Activated B cell treated with CpG ODN at 0.5 μM for 24 hours (primary cell): ENCODE measurements at regions of chr4 and their contacts with region 1.

Region 1: DNA sequence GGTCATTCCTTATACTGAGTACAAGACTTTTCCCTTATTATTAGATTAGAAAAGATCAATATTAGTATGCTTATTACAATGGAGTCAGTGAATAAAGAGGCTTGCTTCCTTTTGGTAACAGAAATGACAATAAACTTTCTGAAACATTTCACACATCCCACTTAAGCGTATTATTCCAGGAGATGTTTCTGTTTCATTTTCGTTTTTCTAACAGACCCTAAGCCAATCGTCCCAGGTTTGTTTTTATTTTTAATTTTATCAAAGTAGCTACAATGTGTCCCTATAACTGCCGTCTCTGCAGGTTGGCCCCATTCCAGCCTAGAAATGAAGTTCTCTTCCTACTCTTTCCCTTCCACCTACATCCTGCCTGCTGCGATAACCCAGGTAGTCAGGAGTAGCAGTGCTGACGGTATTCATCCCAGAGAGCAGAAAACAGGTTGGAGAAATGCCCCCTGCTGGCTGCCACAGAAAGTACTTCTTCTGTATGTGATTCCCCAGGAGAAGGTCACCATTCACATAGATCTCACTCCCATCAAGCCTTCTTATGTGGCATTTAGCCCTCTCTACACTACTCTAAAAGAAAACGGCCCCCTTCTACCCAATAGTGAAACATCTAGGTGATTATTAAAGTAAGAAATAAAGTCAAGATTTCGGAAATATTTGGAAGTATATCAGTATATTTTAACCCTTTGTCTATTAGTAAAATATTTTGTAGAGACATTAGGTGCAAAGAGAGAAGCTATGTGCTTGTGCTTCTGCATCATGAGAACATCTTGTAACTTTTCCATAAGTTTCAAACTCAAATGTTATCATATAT is 40.4 kb downstream of the ENPEP start:
- DNase-seq: peak; percentile 21
- ATAC-seq: peak; percentile 94
- H3K4me3 Mint-ChIP-seq: peak overlapping the region; percentile 94
- H3K27ac Mint-ChIP-seq: peak overlapping the region; percentile 47
- H3K4me1 Mint-ChIP-seq: peaks cover 13% of the 10 kb centered on the region
- H3K27me3 Mint-ChIP-seq: peaks cover under 1% of the 10 kb centered on the region
- CTCF ChIP-seq: peak; percentile 59

Region 2: DNA sequence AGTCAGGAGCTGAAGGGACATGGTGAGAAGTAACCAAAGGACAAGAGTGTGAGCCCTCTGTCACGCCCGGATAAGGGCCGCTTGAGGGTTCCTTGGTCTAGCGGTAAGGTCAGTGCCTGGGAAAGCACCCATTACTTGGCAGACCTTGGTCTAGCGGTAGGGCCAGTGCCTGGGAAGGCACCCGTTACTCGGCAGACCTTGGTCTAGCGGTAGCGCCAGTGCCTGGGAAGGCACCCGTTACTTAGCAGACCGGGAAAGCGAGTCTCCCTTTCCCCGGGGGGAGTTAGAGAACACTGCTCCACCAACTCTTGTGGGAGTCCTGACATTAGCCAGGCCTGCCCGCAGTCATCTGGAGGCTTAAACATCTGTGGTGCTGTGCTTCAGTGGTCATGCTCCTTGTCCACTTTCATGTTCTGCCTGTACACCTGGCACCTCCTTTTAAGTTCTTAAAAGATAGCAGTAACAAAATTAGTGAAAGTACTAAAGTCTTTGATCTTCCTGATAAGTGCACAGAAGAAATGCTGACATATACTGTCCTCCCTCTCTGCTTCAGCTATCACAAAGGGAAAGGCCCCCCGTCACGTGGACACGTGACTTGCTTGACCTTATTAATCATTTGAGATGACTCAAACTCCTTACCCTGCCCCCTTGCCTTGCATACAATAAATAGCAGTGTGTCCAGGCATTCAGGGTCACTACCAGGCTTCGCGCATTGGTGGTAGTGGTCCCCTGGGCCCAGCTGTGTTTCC is 1092.0 kb before region 1 on chr4:
- CTCF ChIA-PET with region 1: no interaction called
- POLR2A ChIA-PET with region 1: no interaction called
- intact Hi-C with region 1: loop called (anchors 1 kb)
- DNase-seq: no peak
- ATAC-seq: no peak
- H3K4me3 Mint-ChIP-seq: no peak overlapping the region
- H3K27ac Mint-ChIP-seq: no peak overlapping the region
- H3K4me1 Mint-ChIP-seq: no peaks in the 10 kb centered on the region
- H3K27me3 Mint-ChIP-seq: no peaks in the 10 kb centered on the region
- CTCF ChIP-seq: no peak

Region 3: DNA sequence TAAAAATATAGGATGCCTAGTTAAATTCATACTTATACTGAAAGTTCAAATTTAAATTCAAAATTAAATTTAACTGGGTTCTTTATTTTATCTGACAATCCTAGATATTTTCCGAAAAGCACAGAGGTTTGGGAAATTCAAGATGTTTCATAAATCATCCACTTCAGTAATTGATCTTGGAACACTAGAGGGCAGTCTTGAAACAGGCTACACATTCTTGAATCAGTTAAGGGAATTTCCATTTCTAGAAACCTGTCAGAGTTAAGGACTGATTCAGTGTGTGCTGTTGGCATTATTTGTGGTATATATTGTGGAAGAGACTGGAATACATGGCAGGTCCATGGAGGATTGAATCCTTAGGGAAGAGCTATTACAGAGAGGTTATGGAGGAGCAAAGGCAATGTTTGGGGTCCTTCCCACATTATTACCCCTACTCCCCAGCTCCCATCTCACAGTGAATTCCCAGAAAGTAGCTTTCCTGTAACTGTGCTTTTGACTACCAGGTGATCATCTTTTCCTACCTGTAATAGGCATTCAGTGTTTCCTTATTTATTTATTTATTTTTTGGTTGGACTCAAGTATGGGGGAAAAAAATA is 510.8 kb before region 1 on chr4:
- CTCF ChIA-PET with region 1: interaction called, 232 read pairs
- POLR2A ChIA-PET with region 1: no interaction called
- intact Hi-C with region 1: loop called (anchors 1 kb)
- DNase-seq: no peak
- ATAC-seq: peak; percentile 60
- H3K4me3 Mint-ChIP-seq: no peak overlapping the region
- H3K27ac Mint-ChIP-seq: no peak overlapping the region
- H3K4me1 Mint-ChIP-seq: no peaks in the 10 kb centered on the region
- H3K27me3 Mint-ChIP-seq: peaks cover 6% of the 10 kb centered on the region
- CTCF ChIP-seq: peak; percentile 83

Region 4: DNA sequence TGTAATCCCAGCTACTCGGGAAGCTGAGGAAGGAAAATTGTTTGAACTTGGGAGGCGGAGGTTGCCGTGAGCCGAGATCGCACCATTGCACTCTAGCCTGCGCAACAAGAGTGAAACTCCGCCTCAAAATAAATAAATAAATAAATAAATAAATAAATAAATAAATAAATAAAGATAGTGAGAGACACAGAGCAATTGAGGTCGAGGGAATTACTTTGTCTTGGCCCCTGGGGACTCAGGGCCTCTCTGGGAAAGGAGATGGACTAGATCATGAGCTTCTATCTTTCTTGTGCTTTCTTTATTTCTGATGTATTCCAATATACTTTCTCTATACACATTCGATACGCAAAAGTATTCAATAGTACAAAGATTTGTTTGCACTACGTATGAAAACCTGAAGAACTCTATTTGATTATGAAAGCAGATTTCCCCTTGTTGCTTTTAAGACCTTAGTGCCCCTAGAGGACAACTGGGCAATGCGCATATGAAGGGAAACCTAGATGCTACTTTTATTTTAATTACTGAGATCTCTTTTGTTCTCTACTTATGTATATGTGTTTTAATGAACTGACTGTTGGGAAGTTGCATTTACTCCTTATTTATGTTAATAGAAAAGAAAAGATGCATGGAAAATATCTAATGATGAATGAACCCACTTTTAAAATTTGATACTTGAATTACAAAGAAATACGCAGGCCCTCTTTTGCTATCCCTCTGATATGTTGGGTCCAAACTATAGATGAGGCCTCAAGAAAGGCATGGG is 305.1 kb before region 1 on chr4:
- CTCF ChIA-PET with region 1: interaction called, 3 read pairs
- POLR2A ChIA-PET with region 1: no interaction called
- intact Hi-C with region 1: loop called (anchors 5 kb)
- DNase-seq: no peak
- ATAC-seq: peak; percentile 49
- H3K4me3 Mint-ChIP-seq: no peak overlapping the region
- H3K27ac Mint-ChIP-seq: no peak overlapping the region
- H3K4me1 Mint-ChIP-seq: peaks cover 1% of the 10 kb centered on the region
- H3K27me3 Mint-ChIP-seq: peaks cover under 1% of the 10 kb centered on the region
- CTCF ChIP-seq: no peak

Region 5: DNA sequence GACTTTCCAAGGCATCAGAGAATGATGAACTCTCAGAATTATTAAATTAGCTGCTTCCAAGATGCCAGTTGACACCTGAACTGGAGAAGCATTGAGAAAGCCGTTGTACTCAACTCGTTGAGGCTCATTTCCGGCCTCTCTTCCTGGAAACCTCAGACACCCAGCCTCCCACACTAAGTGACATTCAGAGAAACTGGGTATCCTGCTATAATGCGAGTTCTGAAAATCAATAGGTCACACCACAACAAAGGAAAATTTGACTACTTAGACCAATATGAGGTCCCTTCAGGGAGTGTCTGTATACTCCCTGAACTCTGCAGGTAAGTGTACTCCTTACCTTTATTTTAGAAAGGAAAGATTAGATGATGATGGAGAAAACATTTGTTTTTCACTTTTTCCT is 10.8 kb after region 1 on chr4:
- CTCF ChIA-PET with region 1: interaction called, 16 read pairs
- POLR2A ChIA-PET with region 1: no interaction called
- intact Hi-C with region 1: no loop called
- DNase-seq: no peak
- ATAC-seq: no peak
- H3K4me3 Mint-ChIP-seq: no peak overlapping the region
- H3K27ac Mint-ChIP-seq: no peak overlapping the region
- H3K4me1 Mint-ChIP-seq: no peaks in the 10 kb centered on the region
- H3K27me3 Mint-ChIP-seq: peaks cover 14% of the 10 kb centered on the region
- CTCF ChIP-seq: no peak

Region 6: GRCh38 chr4:112031712-112032328 is 1515.5 kb after region 1 on chr4:
- CTCF ChIA-PET with region 1: no interaction called
- POLR2A ChIA-PET with region 1: no interaction called
- intact Hi-C with region 1: loop called (anchors 1 kb)
- DNase-seq: no peak
- ATAC-seq: no peak
- H3K4me3 Mint-ChIP-seq: no peak overlapping the region
- H3K27ac Mint-ChIP-seq: no peak overlapping the region
- H3K4me1 Mint-ChIP-seq: no peaks in the 10 kb centered on the region
- H3K27me3 Mint-ChIP-seq: peaks cover 16% of the 10 kb centered on the region
- CTCF ChIP-seq: no peak